ENCODE measurements at regions of chr6 and their contacts with region 1.

Region 1: GRCh38 chr6:151330134-151330696 is 61.1 kb downstream of the ZBTB2 start:
- DNase-seq: no peak
- H3K4me3 ChIP-seq: no peak overlapping the region
- H3K27ac ChIP-seq: peak overlapping the region in 1 of 2 donors; percentile 11
- H3K4me1 ChIP-seq: no peaks in the 10 kb centered on the region
- H3K27me3 ChIP-seq: no peaks in the 10 kb centered on the region
- CTCF ChIP-seq: no peak
- POLR2A ChIP-seq: no peak

Region 2: DNA sequence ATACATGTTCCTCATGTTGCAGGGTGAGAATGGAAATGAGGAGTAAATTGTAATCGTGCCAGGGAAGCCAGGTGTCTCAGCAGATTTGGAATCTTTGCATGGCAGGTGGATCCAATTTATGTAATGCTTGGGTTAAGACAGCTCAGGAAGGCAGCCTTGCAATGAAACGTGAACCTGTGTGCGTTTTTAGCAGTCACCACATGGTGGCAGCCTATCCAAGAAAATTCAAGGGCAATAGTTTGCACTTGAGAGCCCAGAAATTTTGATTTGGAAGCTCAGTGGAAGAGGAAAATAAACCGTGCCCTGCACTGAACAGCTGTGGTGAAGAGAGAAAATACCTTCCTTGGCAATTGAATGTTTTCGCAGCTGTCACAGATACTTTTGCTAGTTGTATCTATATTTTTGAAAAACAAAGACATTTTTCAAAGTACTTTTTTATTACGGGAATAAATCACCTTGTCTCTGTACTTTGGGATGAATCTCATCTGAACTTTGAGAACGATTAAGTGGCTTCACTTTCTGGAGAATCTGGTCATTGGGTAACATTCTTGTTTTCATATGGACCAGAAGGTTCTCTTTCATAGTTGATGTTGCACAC is 438.2 kb before region 1 on chr6:
- intact Hi-C with region 1: loop called (anchors 5 kb)
- DNase-seq: peak; percentile 76 to 80
- H3K4me3 ChIP-seq: no peak overlapping the region
- H3K27ac ChIP-seq: peak overlapping the region; percentile 1 to 2
- H3K4me1 ChIP-seq: no peaks in the 10 kb centered on the region
- H3K27me3 ChIP-seq: no peaks in the 10 kb centered on the region
- CTCF ChIP-seq: peak; percentile 76 to 90 (median 85)
- POLR2A ChIP-seq: no peak

Region 3: GRCh38 chr6:151014404-151015100 is 315.7 kb before region 1 on chr6:
- intact Hi-C with region 1: loop called (anchors 5 kb)
- DNase-seq: peak; percentile 74 to 76
- H3K4me3 ChIP-seq: no peak overlapping the region
- H3K27ac ChIP-seq: peak overlapping the region; percentile 5 to 14
- H3K4me1 ChIP-seq: no peaks in the 10 kb centered on the region
- H3K27me3 ChIP-seq: no peaks in the 10 kb centered on the region
- CTCF ChIP-seq: peak; percentile 95 to 99 (median 97)
- POLR2A ChIP-seq: no peak

Region 4: DNA sequence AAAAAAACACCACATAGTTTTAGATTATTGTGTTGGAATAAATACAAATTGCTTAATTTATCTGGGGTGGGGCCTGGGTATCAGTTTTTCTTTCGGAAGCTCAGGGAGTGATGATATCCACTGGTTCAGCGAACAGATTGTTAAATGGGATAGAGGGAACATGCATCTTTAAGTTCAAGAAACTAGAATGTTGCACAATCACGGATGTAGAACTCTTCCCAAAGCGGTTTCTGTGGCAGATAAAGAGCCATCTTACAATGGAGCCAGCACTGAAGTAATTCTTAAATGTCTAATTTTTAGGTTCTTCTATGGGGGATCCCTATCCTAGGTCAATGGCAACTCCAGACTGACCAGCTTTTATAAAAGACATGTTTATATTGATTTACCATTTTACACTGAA is 131.5 kb after region 1 on chr6:
- intact Hi-C with region 1: no loop called
- DNase-seq: no peak
- H3K4me3 ChIP-seq: no peak overlapping the region
- H3K27ac ChIP-seq: no peak overlapping the region
- H3K4me1 ChIP-seq: no peaks in the 10 kb centered on the region
- H3K27me3 ChIP-seq: no peaks in the 10 kb centered on the region
- CTCF ChIP-seq: no peak
- POLR2A ChIP-seq: no peak

Measured in uterus (tissue), 4 donors.